HCT116 (cell line): ENCODE measurements at regions of chr12 and their contacts with region 1.

Region 1: GRCh38 chr12:6278439-6279255 is 31.8 kb upstream of the PLEKHG6 start:
- DNase-seq: no peak
- ATAC-seq: peak; percentile 65
- H3K4me3 ChIP-seq: peak overlapping the region; percentile 37 to 56
- H3K27ac ChIP-seq: peak overlapping the region; percentile 94
- H3K4me1 ChIP-seq: peaks cover 64 to 78% of the 10 kb centered on the region in 2 experiments
- H3K27me3 ChIP-seq: no peaks in the 10 kb centered on the region; the same call in 1 of the 2 replicates
- CTCF ChIP-seq: peak in 2 of 3 experiments; percentile 55 to 75; a peak in 4 of 6 replicates
- POLR2A ChIP-seq: peak; percentile 12
- RAD21 ChIP-seq: no peak

Region 2: DNA sequence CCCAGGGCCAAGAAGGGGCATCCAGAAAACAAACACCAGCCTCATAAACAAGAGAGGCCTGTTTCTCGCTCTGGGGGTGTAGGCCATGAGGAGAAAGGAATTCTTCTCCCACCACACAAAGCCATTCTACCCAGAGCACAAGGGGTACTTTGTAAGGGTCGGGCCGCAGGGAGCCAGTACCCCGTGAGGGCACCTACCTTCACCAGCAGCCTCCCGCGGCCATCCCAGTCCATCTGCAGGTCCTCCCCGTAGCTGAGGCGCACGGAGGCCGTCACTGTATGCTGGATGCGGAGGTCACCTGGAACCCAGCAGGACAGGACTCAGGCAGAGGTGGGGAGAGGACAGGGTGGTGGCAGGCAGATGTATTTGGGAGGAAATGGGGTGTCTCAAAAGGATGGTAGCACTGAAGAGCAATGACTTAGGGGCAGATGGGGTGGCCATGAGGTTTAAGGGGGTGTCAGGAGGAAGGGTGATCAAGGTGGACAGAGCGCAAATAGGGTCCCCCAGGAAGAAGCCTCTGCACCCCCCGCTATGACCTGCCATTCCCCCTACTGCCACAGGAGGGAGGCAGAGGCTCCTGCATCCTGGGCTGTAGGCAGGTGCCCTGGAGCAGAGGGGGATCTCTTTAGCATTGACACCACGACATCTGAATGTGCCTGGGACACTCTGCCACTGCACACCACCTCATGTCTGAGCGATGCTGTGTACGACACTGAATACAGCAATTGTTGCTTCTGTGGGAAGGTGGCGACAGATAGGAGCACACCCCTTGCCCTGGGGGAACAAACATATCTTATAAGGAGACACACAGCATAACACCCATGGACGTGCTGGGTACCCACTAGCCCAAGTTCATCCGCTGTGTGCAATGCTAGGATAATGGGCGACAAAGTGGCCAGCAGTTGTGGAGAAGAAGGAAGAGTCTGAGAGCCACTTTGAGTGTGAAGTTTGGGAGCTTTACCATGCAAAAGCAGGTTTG is 215.6 kb before region 1 on chr12:
- CTCF ChIA-PET with region 1: interaction called, 62 read pairs
- POLR2A ChIA-PET with region 1: interaction called, 9 read pairs
- RAD21 ChIA-PET with region 1: interaction called, 5 read pairs
- intact Hi-C with region 1: no loop called
- DNase-seq: no peak
- ATAC-seq: peak; percentile 85
- H3K4me3 ChIP-seq: no peak overlapping the region
- H3K27ac ChIP-seq: no peak overlapping the region
- H3K4me1 ChIP-seq: peaks cover 0 to 21% of the 10 kb centered on the region in 2 experiments; a peak in 3 of 4 replicates
- H3K27me3 ChIP-seq: no peaks in the 10 kb centered on the region
- CTCF ChIP-seq: peak; percentile 90 to 98 (median 97)
- POLR2A ChIP-seq: no peak
- RAD21 ChIP-seq: peak; percentile 98

Region 3: GRCh38 chr12:6069437-6070107 is 209.1 kb before region 1 on chr12:
- CTCF ChIA-PET with region 1: interaction called, 62 read pairs
- POLR2A ChIA-PET with region 1: interaction called, 9 read pairs
- RAD21 ChIA-PET with region 1: interaction called, 5 read pairs
- intact Hi-C with region 1: no loop called
- DNase-seq: no peak
- ATAC-seq: no peak
- H3K4me3 ChIP-seq: no peak overlapping the region
- H3K27ac ChIP-seq: no peak overlapping the region
- H3K4me1 ChIP-seq: peaks cover 8 to 33% of the 10 kb centered on the region in 2 experiments; a peak in 3 of 4 replicates
- H3K27me3 ChIP-seq: no peaks in the 10 kb centered on the region
- CTCF ChIP-seq: no peak
- POLR2A ChIP-seq: no peak
- RAD21 ChIP-seq: no peak

Region 4: DNA sequence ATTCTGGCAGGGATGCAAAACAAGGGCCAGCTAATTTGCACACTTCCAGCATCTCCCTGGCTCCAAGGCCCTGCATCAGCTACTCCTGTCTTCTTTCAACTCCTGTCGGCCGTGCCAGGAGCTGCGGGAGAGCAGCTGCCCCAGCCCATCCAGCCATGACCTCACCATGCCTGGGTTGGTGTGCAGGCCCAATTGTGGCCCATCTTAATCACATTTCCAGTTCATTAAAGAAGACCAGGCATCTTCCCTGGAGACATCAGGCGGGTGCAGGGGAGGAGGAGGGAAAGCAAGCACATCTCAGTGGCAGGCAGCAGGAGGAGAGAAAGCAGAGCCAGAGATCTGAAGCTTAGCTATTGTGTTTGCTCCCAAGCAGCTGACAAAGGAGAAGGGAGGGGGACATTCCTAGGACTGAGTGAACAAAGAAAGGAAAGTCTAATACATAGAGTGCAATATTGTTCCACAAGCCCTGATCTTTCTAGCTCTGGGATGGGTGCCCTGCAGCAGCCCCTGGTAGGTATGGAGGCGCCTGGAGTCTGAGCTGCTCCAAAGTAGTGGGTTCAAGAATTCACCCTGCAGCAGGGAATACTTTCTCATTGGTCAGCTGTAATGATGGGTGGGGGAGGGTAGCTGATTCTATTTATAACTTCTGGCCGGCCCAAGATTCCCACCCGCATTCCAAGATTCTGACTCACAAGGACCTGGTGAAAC is 194.2 kb before region 1 on chr12:
- CTCF ChIA-PET with region 1: interaction called, 10 read pairs
- POLR2A ChIA-PET with region 1: no interaction called
- RAD21 ChIA-PET with region 1: no interaction called
- intact Hi-C with region 1: no loop called
- DNase-seq: peak; percentile 60
- ATAC-seq: peak; percentile 67
- H3K4me3 ChIP-seq: peak overlapping the region; percentile 19 to 43
- H3K27ac ChIP-seq: peak overlapping the region; percentile 64
- H3K4me1 ChIP-seq: peaks cover 46 to 63% of the 10 kb centered on the region in 2 experiments
- H3K27me3 ChIP-seq: no peaks in the 10 kb centered on the region
- CTCF ChIP-seq: no peak
- POLR2A ChIP-seq: no peak
- RAD21 ChIP-seq: 0 out of 2 replicates have a peak, but pooled peaks have one; percentile 20

Region 5: DNA sequence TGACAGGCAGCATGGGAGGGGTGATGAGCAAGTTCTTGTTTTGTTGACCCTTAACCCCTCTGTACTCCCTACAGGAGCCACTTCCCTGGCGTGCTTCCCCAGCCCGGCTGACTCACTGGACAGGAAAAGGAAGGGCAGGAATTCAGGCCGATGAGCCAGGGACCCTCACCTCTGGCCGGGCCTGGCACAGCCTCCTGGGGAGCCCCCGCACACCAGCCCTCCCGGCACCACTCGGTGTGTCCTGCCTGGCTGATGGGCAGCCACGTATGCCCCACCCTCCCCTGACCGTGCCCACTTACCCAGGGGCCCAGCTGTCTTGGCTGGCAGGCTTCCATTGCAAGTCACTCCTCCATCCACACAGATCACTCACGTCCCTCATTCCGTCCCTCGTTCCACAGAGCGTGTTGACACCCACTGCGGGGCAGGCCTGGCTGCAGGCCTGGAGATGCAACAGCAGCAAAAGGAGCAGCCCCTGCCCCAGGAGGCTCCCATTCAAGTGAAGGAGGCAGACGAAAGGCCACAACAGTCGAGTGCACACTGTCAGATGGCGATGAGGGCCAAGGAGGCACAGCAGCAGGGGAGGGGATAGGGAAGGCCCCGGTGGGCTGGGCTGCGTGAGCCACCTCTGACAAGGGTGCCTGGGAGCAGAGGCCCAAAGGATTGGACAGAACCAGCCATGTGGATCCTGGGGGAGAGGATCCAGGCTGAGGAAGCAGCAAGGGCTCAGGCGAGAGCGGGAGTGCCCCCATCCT is 98.2 kb before region 1 on chr12:
- CTCF ChIA-PET with region 1: no interaction called
- POLR2A ChIA-PET with region 1: no interaction called
- RAD21 ChIA-PET with region 1: no interaction called
- intact Hi-C with region 1: no loop called
- DNase-seq: peak; percentile 15
- ATAC-seq: peak; percentile 84
- H3K4me3 ChIP-seq: no peak overlapping the region
- H3K27ac ChIP-seq: peak overlapping the region; percentile 29; the same call in 1 of the 2 replicates
- H3K4me1 ChIP-seq: peaks cover 16 to 51% of the 10 kb centered on the region in 2 experiments
- H3K27me3 ChIP-seq: no peaks in the 10 kb centered on the region
- CTCF ChIP-seq: no peak
- POLR2A ChIP-seq: no peak
- RAD21 ChIP-seq: no peak